HCT116 (cell line): ENCODE measurements at regions of chr6 and their contacts with region 1.

Region 1: DNA sequence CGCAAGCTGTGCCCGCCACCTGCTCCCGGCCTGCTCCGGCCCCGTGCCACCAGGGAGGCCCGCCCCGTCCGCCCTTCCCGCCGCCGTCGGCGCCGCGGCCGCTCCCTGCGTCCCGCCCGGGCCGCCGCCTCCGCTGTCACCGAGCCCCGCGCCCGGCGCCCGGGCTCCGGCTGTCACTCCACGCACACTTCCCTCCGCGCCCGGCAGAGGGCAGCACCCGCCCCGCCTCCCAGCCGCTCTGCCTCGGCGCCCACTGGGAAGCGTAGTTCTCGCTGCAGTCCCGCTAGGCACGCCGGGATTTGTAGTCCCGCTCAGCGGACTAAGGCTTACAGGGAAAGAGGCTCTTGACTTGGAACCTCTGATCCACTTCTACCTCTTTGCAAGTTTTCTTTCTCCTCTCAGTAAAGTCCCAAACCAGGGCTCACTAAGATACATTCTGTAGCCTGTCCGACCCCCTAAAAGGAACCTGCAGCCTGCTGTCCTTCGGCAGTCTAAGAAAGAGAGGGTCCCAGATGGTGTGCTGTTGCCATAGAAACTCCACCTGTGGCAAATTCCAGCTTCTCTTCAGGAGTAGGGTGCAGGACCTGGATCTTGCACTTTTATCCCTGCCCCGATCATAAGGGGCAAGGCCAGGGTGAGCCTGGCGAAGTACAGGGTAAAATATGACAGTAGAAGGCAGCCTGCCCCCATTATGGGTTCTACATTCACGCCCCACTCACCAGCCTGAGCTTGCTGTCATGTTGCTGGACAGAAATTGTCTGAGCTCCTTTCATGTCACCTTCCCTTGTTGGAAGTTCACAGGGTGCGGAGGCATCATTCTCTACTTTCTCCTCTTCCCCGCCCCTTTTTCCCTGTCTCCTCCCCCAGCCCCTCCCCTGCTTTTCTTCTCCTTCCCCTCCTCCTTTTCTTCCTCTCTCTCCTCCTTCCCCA is at the start of gene TFEB:
- DNase-seq: peak; percentile 73
- ATAC-seq: peak; percentile 71
- H3K4me3 ChIP-seq: peak within 1 kb of the TSS; percentile 58 to 76
- H3K27ac ChIP-seq: peak within 1 kb of the TSS; percentile 75; the same call in 1 of the 2 replicates
- H3K4me1 ChIP-seq: peaks cover 13 to 26% of the 10 kb centered on the region in 2 experiments
- H3K27me3 ChIP-seq: no peaks in the 10 kb centered on the region
- CTCF ChIP-seq: peak; percentile 68 to 89 (median 77)
- POLR2A ChIP-seq: no peak
- RAD21 ChIP-seq: peak; percentile 63
- total RNA-seq, gene TFEB: 4.8 TPM

Region 2: GRCh38 chr6:41713161-41713649 is 22.5 kb before region 1 on chr6:
- CTCF ChIA-PET with region 1: interaction called, 17 read pairs
- POLR2A ChIA-PET with region 1: no interaction called
- RAD21 ChIA-PET with region 1: interaction called in 1 of 2 experiments, 4 read pairs
- intact Hi-C with region 1: no loop called
- DNase-seq: no peak
- ATAC-seq: peak; percentile 79
- H3K4me3 ChIP-seq: peak overlapping the region in 1 of 2 experiments; percentile 39; a peak in 2 of 4 replicates
- H3K27ac ChIP-seq: peak overlapping the region; percentile 91
- H3K4me1 ChIP-seq: peaks cover 41 to 47% of the 10 kb centered on the region in 2 experiments
- H3K27me3 ChIP-seq: no peaks in the 10 kb centered on the region
- CTCF ChIP-seq: no peak
- POLR2A ChIP-seq: no peak
- RAD21 ChIP-seq: no peak